Caco-2 (cell line): ENCODE measurements at regions of chr15 and their contacts with region 1.

Region 1: GRCh38 chr15:39358441-39359041 is 222.3 kb upstream of the THBS1 start:
- DNase-seq: no peak
- H3K4me3 ChIP-seq: no peak overlapping the region
- H3K4me3 Mint-ChIP-seq: no peak overlapping the region
- H3K27ac Mint-ChIP-seq: peak overlapping the region; percentile 45
- H3K4me1 ChIP-seq: peaks cover 41% of the 10 kb centered on the region
- H3K4me1 Mint-ChIP-seq: peaks cover 24% of the 10 kb centered on the region
- H3K27me3 ChIP-seq: no peaks in the 10 kb centered on the region
- H3K27me3 Mint-ChIP-seq: no peaks in the 10 kb centered on the region
- CTCF ChIP-seq: no peak

Region 2: DNA sequence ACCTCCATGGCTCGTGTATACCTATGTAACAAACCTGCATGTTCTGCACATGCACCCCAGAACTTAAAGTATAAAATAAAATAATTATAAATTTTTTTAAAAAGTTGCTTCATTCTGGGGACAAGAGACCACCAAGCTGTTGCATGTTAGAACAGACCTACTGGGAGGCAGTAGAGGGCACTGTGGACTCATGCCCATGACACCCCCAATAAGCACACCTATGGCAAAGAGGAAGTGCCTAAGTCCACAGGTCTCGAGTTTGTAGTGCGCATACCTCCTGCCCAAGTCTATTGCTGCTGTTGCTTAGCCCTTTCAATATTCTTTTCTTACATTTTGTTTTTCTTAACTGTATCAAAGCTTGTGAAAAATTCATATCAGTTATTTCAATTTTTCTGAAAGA is 45.6 kb before region 1 on chr15:
- CTCF ChIA-PET with region 1: no interaction called
- POLR2A ChIA-PET with region 1: no interaction called
- intact Hi-C with region 1: no loop called
- DNase-seq: peak; percentile 16 to 35
- H3K4me3 ChIP-seq: no peak overlapping the region
- H3K4me3 Mint-ChIP-seq: no peak overlapping the region
- H3K27ac Mint-ChIP-seq: no peak overlapping the region
- H3K4me1 ChIP-seq: peaks cover 5% of the 10 kb centered on the region; the same call in 1 of the 2 replicates
- H3K4me1 Mint-ChIP-seq: no peaks in the 10 kb centered on the region
- H3K27me3 ChIP-seq: no peaks in the 10 kb centered on the region
- H3K27me3 Mint-ChIP-seq: no peaks in the 10 kb centered on the region
- CTCF ChIP-seq: peak in 1 of 2 experiments; percentile 25

Region 3: GRCh38 chr15:39429898-39430357 is 71.4 kb after region 1 on chr15:
- CTCF ChIA-PET with region 1: no interaction called
- POLR2A ChIA-PET with region 1: no interaction called
- intact Hi-C with region 1: loop called (anchors 10 kb)
- DNase-seq: no peak
- H3K4me3 ChIP-seq: no peak overlapping the region
- H3K4me3 Mint-ChIP-seq: no peak overlapping the region
- H3K27ac Mint-ChIP-seq: no peak overlapping the region
- H3K4me1 ChIP-seq: peaks cover 8% of the 10 kb centered on the region
- H3K4me1 Mint-ChIP-seq: peaks cover 10% of the 10 kb centered on the region
- H3K27me3 ChIP-seq: no peaks in the 10 kb centered on the region
- H3K27me3 Mint-ChIP-seq: no peaks in the 10 kb centered on the region
- CTCF ChIP-seq: no peak